ENCODE measurements at regions of chrX and their contacts with region 1.

Region 1: DNA sequence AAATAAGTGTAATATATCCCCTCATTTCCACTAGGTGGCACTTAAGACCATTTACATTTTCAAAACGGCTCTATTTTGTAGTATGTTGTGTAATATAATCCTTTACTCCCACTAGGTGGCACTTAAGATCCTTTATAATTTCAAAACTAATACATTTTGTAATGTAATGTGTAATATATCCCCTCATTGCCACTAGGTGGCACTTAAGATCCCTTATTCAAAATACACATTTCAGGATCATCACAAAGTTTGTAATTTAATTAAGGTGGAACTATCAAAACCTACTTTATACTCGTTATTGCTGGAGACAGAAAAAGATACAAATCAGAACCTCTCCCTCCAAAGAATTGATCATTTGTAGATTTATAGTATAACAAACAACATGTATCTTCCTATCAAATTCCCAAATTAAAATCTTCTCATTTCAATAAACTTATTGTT is 132.5 kb downstream of the ARHGAP6 start:
- DNase-seq: no peak
- H3K4me3 ChIP-seq: no peak overlapping the region
- H3K27ac ChIP-seq: peak overlapping the region in 2 of 4 donors; percentile 25 to 50
- H3K4me1 ChIP-seq: peaks cover 0 to 39% (median 4%) of the 10 kb centered on the region in 4 donors
- H3K27me3 ChIP-seq: no peaks in the 10 kb centered on the region
- CTCF ChIP-seq: peak; percentile 68 to 94 (median 82)
- EP300 ChIP-seq: no peak
- POLR2A ChIP-seq: no peak

Region 2: GRCh38 chrX:11143931-11144678 is 389.1 kb before region 1 on chrX:
- intact Hi-C with region 1: loop called (anchors 1 kb)
- DNase-seq: peak; percentile 77
- H3K4me3 ChIP-seq: no peak overlapping the region
- H3K27ac ChIP-seq: peak overlapping the region in 2 of 4 donors; percentile 23 to 34
- H3K4me1 ChIP-seq: peaks cover 0 to 9% (median 0%) of the 10 kb centered on the region in 4 donors
- H3K27me3 ChIP-seq: no peaks in the 10 kb centered on the region
- CTCF ChIP-seq: peak; percentile 46 to 72 (median 50)
- EP300 ChIP-seq: no peak
- POLR2A ChIP-seq: no peak

Region 3: DNA sequence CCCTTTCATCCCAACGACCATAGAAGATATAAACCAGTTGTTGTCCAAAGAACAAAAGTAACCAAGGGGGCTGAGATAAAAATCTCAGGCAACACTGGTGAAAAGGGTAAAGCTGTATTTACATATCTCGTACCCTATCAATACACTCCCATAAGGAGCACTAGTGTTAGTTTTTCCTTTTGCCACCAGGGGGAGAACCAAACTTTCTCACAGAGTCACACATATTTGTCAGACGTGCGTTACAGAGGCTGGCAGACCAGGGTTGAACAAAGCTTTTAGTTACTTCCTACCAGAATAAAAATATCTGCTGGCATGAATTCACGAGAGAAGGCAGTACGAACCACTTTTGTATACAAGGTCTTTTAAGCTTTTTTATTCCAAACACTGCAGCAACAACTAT is 151.8 kb before region 1 on chrX:
- intact Hi-C with region 1: loop called (anchors 5 kb)
- DNase-seq: peak; percentile 71
- H3K4me3 ChIP-seq: no peak overlapping the region
- H3K27ac ChIP-seq: peak overlapping the region; percentile 28 to 77 (median 53)
- H3K4me1 ChIP-seq: peaks cover 0 to 34% (median 17%) of the 10 kb centered on the region in 4 donors
- H3K27me3 ChIP-seq: no peaks in the 10 kb centered on the region
- CTCF ChIP-seq: peak in 3 of 4 experiments; percentile 39 to 51 (median 51)
- EP300 ChIP-seq: no peak
- POLR2A ChIP-seq: no peak

Region 4: DNA sequence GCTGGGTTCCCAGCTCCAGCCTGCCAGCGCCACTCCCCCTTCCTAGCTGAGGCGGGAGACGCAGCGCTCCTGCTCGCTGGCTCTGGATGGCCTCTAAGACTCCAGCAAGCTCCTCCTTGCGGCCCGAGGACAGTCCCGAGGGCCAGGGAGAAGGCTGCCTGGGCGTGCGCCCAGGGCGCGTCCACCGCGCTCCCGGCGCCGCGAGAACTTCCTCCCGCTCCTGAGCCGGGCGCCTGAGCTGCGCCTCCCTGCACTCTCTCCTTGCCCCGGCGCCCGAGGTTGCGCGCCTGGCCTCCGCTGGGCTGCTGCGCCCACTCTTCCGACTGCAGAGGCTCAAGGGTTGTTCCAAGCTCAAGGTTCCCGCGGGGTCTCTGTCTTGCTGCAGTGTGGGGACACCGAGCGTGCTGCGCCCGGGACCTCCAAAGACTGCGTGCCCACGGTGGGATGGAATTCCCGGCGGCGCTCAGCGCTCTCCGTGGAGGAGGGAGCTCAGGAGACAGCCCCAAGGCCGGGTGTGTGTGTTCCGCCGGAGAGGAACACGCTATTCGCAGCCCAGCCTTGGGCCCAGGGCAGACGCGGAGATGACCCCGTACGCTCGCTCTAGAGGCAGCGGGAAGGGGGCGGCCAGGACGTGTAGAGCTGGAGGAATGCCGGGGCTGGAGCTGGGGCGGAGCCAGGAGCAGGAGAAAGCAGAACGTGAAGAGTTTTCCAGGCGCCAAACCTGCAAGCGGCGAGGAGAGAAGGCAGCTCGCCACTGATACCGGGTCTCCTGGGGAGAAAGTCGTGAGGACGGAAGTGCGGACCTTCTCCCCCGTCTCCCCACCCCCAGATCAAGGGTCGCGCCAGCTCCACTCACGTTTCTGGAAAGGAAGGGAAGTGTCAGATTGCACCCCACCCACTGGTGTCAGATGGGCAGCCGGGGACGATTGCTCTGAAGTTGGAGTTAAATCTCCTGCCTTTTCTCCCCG is 132.2 kb after region 1 on chrX and contains the start of gene ARHGAP6:
- intact Hi-C with region 1: loop called (anchors 5 kb)
- DNase-seq: peak; percentile 92
- H3K4me3 ChIP-seq: peak within 1 kb of the TSS; percentile 56 to 67 (median 60)
- H3K27ac ChIP-seq: peak within 1 kb of the TSS; percentile 77 to 88 (median 85)
- H3K4me1 ChIP-seq: peaks cover 0 to 12% (median 4%) of the 10 kb centered on the region in 4 donors
- H3K27me3 ChIP-seq: no peaks in the 10 kb centered on the region
- CTCF ChIP-seq: no peak
- EP300 ChIP-seq: no peak
- POLR2A ChIP-seq: peak in 1 of 2 donors; percentile 12
- total RNA-seq, gene ARHGAP6: 36.2 to 47.6 (median 42.7) TPM

Region 5: DNA sequence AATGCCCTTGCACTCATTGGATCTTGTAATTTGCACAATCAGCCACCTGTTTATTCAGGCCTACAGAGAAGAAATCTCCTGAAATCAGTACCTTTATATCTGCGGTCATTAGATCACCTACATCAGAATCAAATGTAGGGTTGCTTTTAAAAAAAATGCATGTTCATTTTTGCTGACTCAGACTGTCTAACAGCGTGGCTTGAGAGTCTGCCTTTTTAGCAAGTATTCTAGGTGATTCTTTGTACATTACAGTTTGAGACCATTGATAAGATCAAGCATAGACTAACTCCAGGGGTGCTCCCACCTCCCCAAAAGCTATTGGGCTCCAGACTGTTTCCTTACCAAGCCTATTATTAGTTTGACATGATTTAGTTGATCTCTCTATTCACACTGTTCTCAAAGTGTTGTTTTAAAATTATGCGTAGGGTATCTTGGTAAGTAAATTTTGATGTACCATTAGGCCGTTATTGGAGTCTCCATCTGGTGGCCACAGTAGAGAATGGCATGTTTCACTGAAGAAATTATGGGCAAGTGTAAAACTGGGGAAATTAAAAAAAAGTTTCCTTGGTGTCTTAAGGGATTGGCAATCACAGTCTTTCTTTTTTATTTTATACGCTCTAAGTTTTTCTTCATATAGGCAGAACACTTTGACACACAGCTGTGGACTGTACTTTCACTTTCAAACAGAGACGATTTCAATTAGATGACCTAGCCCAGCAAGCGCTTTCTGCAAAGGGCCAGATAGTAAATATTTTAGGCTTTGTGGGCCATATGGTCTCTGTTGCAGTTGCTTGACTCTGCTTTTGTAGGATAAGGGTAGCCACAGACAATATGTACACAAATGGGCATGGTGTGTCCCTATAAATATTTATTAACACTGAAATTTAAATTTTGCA is 191.1 kb after region 1 on chrX:
- intact Hi-C with region 1: loop called (anchors 1 kb)
- DNase-seq: no peak
- H3K4me3 ChIP-seq: no peak overlapping the region
- H3K27ac ChIP-seq: no peak overlapping the region
- H3K4me1 ChIP-seq: no peaks in the 10 kb centered on the region
- H3K27me3 ChIP-seq: no peaks in the 10 kb centered on the region
- CTCF ChIP-seq: peak; percentile 61 to 80 (median 65)
- EP300 ChIP-seq: no peak
- POLR2A ChIP-seq: no peak

Region 6: GRCh38 chrX:11758400-11759171 is 225.4 kb after region 1 on chrX:
- intact Hi-C with region 1: loop called (anchors 2 kb)
- DNase-seq: peak; percentile 94
- H3K4me3 ChIP-seq: peak overlapping the region; percentile 58 to 74 (median 66)
- H3K27ac ChIP-seq: peak overlapping the region; percentile 87 to 92 (median 89)
- H3K4me1 ChIP-seq: peaks cover 0 to 17% (median 2%) of the 10 kb centered on the region in 4 donors
- H3K27me3 ChIP-seq: no peaks in the 10 kb centered on the region
- CTCF ChIP-seq: peak in 3 of 4 experiments; percentile 13 to 69 (median 19)
- EP300 ChIP-seq: no peak
- POLR2A ChIP-seq: no peak

Region 7: GRCh38 chrX:11770320-11770719 is 237.1 kb after region 1 on chrX:
- intact Hi-C with region 1: loop called (anchors 2 kb)
- DNase-seq: no peak
- H3K4me3 ChIP-seq: no peak overlapping the region
- H3K27ac ChIP-seq: no peak overlapping the region
- H3K4me1 ChIP-seq: no peaks in the 10 kb centered on the region
- H3K27me3 ChIP-seq: no peaks in the 10 kb centered on the region
- CTCF ChIP-seq: peak; percentile 37 to 70 (median 53)
- EP300 ChIP-seq: no peak
- POLR2A ChIP-seq: no peak

Region 8: GRCh38 chrX:12263211-12263610 is 730.0 kb after region 1 on chrX:
- intact Hi-C with region 1: no loop called
- DNase-seq: no peak
- H3K4me3 ChIP-seq: no peak overlapping the region
- H3K27ac ChIP-seq: no peak overlapping the region
- H3K4me1 ChIP-seq: no peaks in the 10 kb centered on the region
- H3K27me3 ChIP-seq: no peaks in the 10 kb centered on the region
- CTCF ChIP-seq: no peak
- EP300 ChIP-seq: no peak
- POLR2A ChIP-seq: no peak